ENCODE measurements at regions of chr19 and their contacts with region 1.

Region 1: GRCh38 chr19:10565567-10566407 is at the start of gene KRI1:
- DNase-seq: peak; percentile 98 to 99
- H3K4me3 ChIP-seq: peak within 1 kb of the TSS; percentile 91 to 94
- H3K27ac ChIP-seq: peak within 1 kb of the TSS; percentile 91 to 92
- H3K4me1 ChIP-seq: peaks cover 0 to 42% (median 32%) of the 10 kb centered on the region in 4 donors
- H3K27me3 ChIP-seq: no peaks in the 10 kb centered on the region
- CTCF ChIP-seq: peak; percentile 13 to 53

Region 2: DNA sequence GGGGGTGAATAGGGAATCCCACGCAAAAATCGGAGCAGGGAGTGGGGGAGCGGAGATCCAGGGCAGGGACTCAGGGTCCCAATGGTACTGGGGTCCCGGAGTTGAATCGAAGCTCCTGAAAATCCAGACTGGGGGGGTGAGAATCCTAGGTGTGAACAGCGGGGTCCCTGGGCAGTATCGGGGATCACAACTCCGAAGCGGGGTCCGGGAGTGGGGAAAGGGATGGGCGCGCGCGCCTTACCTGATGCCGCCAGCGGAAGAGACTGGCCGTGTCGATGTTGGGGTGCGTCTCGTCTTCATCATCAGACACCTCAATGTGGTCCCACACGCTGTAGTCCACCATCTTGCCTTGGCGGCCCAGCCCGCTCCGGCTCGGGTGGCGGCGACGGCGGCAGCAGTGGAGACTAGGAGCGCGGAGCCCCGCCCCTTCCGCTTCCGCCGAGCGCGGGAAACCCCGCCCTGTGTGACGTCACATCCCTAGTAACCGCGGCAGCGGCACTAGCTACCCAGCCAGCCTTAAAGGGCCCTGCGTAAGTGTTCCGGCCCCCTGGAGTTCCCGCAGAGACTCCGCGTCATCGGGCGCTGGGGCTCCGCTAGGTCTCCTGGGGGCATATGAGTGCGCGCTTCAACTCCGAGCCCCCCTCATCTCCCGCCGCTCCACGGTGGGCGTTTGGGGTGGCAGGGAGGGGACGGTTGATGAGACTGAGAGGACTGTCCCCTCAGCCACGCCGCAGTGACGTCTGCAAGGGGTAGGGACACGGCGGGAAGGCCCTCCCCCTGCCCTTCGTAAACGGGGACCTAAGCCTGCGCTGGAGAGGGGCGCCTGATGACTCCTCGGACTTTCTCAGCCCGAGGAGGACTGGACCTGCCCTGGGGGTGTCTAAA is 162.4 kb before region 1 on chr19 and contains the start of gene CDC37:
- intact Hi-C with region 1: loop called (anchors 10 kb)
- DNase-seq: peak; percentile 94 to 97
- H3K4me3 ChIP-seq: peak within 1 kb of the TSS; percentile 92 to 96
- H3K27ac ChIP-seq: peak within 1 kb of the TSS; percentile 75 to 80
- H3K4me1 ChIP-seq: peaks cover 0 to 46% (median 43%) of the 10 kb centered on the region in 4 donors
- H3K27me3 ChIP-seq: peaks cover 0 to 32% of the 10 kb centered on the region in 2 donors
- CTCF ChIP-seq: no peak

Region 3: DNA sequence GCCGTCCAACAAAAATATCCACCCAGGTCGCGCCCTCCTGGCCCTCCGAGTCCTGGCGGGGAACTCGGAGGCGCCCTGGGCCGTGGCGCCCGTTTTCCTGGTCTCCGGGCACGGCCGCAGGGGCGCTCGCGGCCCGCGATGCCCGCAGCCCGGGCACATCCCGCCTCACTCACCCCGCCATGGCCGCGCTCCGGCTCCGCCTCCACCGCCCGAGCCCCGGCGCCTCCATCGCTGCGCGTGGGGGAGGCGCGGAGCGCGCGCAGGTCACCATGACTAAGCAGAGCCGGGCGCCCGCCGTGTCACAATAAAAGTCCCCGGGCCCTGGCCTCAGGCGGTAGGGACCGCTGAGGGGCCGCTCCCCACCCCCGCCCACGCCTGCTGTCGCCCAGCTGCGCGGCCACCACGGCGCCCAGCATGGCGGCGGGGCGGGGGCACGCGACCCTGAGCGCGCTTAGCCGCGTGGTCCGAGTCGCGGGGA is 63.2 kb before region 1 on chr19:
- intact Hi-C with region 1: loop called (anchors 5 kb)
- DNase-seq: peak; percentile 94 to 97
- H3K4me3 ChIP-seq: peak overlapping the region; percentile 96
- H3K27ac ChIP-seq: peak overlapping the region; percentile 97 to 99
- H3K4me1 ChIP-seq: peaks cover 0 to 48% (median 36%) of the 10 kb centered on the region in 4 donors
- H3K27me3 ChIP-seq: no peaks in the 10 kb centered on the region
- CTCF ChIP-seq: no peak

Region 4: DNA sequence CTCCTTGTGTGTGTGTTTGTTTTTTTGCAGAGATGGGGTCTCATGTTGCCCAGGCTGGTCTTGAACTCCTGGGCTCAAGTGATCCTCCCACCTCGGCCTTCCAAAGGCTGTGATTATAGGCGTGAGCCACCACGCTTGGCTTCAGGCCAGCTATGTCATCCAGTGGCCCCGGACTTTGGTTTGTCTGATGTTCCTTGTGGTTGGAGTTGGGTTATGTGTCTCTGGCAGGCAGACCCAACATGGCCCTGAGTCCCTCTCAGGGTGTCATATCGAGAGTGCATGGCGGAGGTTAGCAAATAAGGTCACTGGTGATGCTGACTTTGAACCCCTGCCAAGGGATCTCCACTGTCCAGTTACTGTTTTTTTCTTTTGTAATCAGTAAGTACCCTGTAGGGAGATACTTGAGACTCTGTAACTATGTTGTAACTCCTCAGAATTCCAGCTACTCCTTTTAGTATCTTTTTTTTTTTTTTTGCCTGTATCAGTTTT is 432.3 kb after region 1 on chr19:
- intact Hi-C with region 1: no loop called
- DNase-seq: peak in 1 of 2 donors; percentile 36
- H3K4me3 ChIP-seq: no peak overlapping the region
- H3K27ac ChIP-seq: no peak overlapping the region
- H3K4me1 ChIP-seq: no peaks in the 10 kb centered on the region
- H3K27me3 ChIP-seq: no peaks in the 10 kb centered on the region
- CTCF ChIP-seq: no peak

Measured in tibial artery (tissue), 4 donors.